Activated B cell treated with CpG ODN at 0.5 μM for 24 hours (primary cell): ENCODE measurements at regions of chr7 and their contacts with region 1.

Region 1: GRCh38 chr7:120805636-120806388 is 52.1 kb downstream of the TSPAN12 start:
- DNase-seq: no peak
- ATAC-seq: peak; percentile 69
- H3K4me3 Mint-ChIP-seq: no peak overlapping the region
- H3K27ac Mint-ChIP-seq: no peak overlapping the region
- H3K4me1 Mint-ChIP-seq: no peaks in the 10 kb centered on the region
- H3K27me3 Mint-ChIP-seq: peaks cover 7% of the 10 kb centered on the region
- CTCF ChIP-seq: peak; percentile 63

Region 2: GRCh38 chr7:120857588-120858573 is 52.1 kb after region 1 on chr7 and contains the start of gene TSPAN12:
- CTCF ChIA-PET with region 1: no interaction called
- POLR2A ChIA-PET with region 1: no interaction called
- intact Hi-C with region 1: loop called (anchors 1 kb)
- DNase-seq: peak; percentile 54
- ATAC-seq: peak; percentile 87
- H3K4me3 Mint-ChIP-seq: peak within 1 kb of the TSS; percentile 90
- H3K27ac Mint-ChIP-seq: no peak within 1 kb of the TSS
- H3K4me1 Mint-ChIP-seq: peaks cover 14% of the 10 kb centered on the region
- H3K27me3 Mint-ChIP-seq: peaks cover 59% of the 10 kb centered on the region
- CTCF ChIP-seq: no peak
- total RNA-seq, gene TSPAN12: not detected in 2 replicates

Region 3: GRCh38 chr7:121081327-121081936 is 275.6 kb after region 1 on chr7:
- CTCF ChIA-PET with region 1: interaction called, 7 read pairs
- POLR2A ChIA-PET with region 1: no interaction called
- intact Hi-C with region 1: loop called (anchors 1 kb)
- DNase-seq: no peak
- ATAC-seq: peak; percentile 83
- H3K4me3 Mint-ChIP-seq: no peak overlapping the region
- H3K27ac Mint-ChIP-seq: no peak overlapping the region
- H3K4me1 Mint-ChIP-seq: peaks cover 11% of the 10 kb centered on the region
- H3K27me3 Mint-ChIP-seq: peaks cover 3% of the 10 kb centered on the region
- CTCF ChIP-seq: peak; percentile 46

Region 4: GRCh38 chr7:121337398-121337797 is 531.6 kb after region 1 on chr7:
- CTCF ChIA-PET with region 1: no interaction called
- POLR2A ChIA-PET with region 1: no interaction called
- intact Hi-C with region 1: loop called (anchors 5 kb)
- DNase-seq: no peak
- ATAC-seq: peak; percentile 72
- H3K4me3 Mint-ChIP-seq: no peak overlapping the region
- H3K27ac Mint-ChIP-seq: peak overlapping the region; percentile 41
- H3K4me1 Mint-ChIP-seq: peaks cover 9% of the 10 kb centered on the region
- H3K27me3 Mint-ChIP-seq: no peaks in the 10 kb centered on the region
- CTCF ChIP-seq: no peak